A673 (cell line): ENCODE measurements at regions of chr6 and their contacts with region 1.

Region 1: GRCh38 chr6:150417899-150418826 is 49.4 kb downstream of the IYD start:
- DNase-seq: peak; percentile 91
- H3K4me3 ChIP-seq: peak overlapping the region; percentile 39
- H3K27ac ChIP-seq: peak overlapping the region; percentile 92
- H3K4me1 ChIP-seq: peaks cover 27% of the 10 kb centered on the region
- H3K27me3 ChIP-seq: no peaks in the 10 kb centered on the region
- CTCF ChIP-seq: peak; percentile 88

Region 2: DNA sequence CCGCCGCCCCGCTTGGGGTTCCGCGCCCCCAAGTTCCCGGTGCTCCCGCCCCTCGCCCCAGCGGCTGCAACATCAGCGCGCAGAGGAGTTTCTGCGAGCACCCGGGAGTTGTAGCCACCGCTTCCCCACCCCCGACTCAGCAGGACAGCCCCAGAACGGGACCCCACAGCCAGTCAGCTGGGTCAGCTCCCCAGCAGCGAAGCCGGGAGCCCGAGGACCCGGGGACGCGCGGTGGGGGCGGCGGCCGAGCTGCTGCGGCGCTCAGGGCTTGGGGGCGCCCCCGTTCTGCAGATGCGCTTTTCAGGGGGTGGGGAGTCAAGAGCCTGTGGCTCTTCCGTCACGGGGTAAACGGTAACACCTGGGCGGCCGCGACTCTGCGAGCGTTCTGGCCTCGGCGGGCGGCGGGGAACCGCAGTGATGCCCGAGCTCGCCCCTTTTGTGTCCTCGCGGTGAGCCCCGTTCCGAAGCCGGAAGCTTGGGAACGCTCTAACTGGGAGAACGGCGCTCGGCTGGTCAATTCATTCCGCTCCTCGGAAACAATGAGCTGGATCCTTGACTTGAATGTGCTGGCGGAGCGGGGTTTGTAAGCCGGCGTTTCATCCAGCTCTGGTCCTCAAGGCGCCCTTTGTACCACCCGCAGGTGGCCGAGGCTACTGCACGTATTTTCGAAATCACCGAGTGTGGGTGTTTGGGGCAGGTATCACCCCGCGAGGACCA is 182.3 kb after region 1 on chr6:
- CTCF ChIA-PET with region 1: interaction called, 3 read pairs
- POLR2A ChIA-PET with region 1: no interaction called
- intact Hi-C with region 1: loop called (anchors 1 kb)
- DNase-seq: peak; percentile 80
- H3K4me3 ChIP-seq: peak overlapping the region; percentile 63
- H3K27ac ChIP-seq: no peak overlapping the region
- H3K4me1 ChIP-seq: no peaks in the 10 kb centered on the region
- H3K27me3 ChIP-seq: peaks cover 11% of the 10 kb centered on the region
- CTCF ChIP-seq: peak; percentile 53

Region 3: DNA sequence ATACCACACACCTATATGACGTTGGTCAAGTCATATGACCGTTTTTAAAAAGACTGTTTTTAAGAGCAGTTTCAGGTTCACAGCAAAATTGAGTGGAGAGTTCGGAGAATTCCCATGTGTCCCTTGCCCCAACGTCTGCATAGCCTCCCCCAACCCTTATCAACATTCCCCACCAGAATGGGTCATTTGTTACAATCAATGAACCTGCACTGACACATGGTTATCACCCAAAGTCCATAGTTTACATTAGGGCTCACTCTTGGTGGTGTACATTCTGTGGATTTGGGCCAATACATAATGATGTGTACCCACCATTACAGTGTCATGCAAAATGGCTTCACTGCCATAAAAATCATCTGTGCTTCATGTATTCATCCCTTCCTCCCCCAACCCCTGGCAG is 921.2 kb after region 1 on chr6:
- CTCF ChIA-PET with region 1: no interaction called
- POLR2A ChIA-PET with region 1: no interaction called
- intact Hi-C with region 1: loop called (anchors 5 kb)
- DNase-seq: no peak
- H3K4me3 ChIP-seq: no peak overlapping the region
- H3K27ac ChIP-seq: no peak overlapping the region
- H3K4me1 ChIP-seq: peaks cover 13% of the 10 kb centered on the region
- H3K27me3 ChIP-seq: no peaks in the 10 kb centered on the region
- CTCF ChIP-seq: no peak